Natural killer cell (primary cell): ENCODE measurements at regions of chr2 and their contacts with region 1.

Region 1: GRCh38 chr2:156435715-156436496 is at the start of gene GPD2:
- DNase-seq: peak; percentile 65 to 73
- ATAC-seq: peak; percentile 74 to 79 (median 75)
- H3K4me3 ChIP-seq: peak within 1 kb of the TSS; percentile 66
- H3K4me3 Mint-ChIP-seq: peak within 1 kb of the TSS; percentile 97
- H3K27ac ChIP-seq: peak within 1 kb of the TSS; percentile 79
- H3K27ac Mint-ChIP-seq: peak within 1 kb of the TSS; percentile 93 to 95
- H3K4me1 ChIP-seq: peaks cover 16% of the 10 kb centered on the region
- H3K4me1 Mint-ChIP-seq: peaks cover 34 to 38% of the 10 kb centered on the region in 2 donors
- H3K27me3 ChIP-seq: no peaks in the 10 kb centered on the region
- H3K27me3 Mint-ChIP-seq: no peaks in the 10 kb centered on the region
- CTCF ChIP-seq: no peak
- total RNA-seq, gene GPD2: 12.5 to 20.2 (median 18.3) TPM

Region 2: DNA sequence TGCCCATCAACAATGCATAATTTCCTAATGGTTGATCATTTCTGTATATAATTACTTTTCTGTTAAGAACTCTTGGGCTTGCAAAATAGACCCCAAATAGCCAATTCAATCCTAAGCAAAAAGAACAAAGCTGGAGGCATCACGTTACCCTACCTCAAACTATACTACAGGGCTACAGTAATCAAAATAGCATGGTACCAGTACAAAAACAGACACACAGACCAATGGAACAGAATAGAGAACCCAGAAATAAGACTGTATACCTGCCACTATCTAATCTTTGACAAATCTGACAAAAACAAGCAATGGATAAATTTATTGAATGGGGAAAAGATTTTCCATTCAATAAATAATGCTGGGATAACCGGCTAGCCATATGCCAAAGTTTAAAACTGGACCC is 182.1 kb before region 1 on chr2:
- intact Hi-C with region 1: no loop called
- DNase-seq: no peak
- ATAC-seq: no peak
- H3K4me3 ChIP-seq: no peak overlapping the region
- H3K4me3 Mint-ChIP-seq: no peak overlapping the region
- H3K27ac ChIP-seq: no peak overlapping the region
- H3K27ac Mint-ChIP-seq: no peak overlapping the region
- H3K4me1 ChIP-seq: no peaks in the 10 kb centered on the region
- H3K4me1 Mint-ChIP-seq: no peaks in the 10 kb centered on the region
- H3K27me3 ChIP-seq: no peaks in the 10 kb centered on the region
- H3K27me3 Mint-ChIP-seq: peaks cover 0 to 5% of the 10 kb centered on the region in 2 donors
- CTCF ChIP-seq: no peak

Region 3: DNA sequence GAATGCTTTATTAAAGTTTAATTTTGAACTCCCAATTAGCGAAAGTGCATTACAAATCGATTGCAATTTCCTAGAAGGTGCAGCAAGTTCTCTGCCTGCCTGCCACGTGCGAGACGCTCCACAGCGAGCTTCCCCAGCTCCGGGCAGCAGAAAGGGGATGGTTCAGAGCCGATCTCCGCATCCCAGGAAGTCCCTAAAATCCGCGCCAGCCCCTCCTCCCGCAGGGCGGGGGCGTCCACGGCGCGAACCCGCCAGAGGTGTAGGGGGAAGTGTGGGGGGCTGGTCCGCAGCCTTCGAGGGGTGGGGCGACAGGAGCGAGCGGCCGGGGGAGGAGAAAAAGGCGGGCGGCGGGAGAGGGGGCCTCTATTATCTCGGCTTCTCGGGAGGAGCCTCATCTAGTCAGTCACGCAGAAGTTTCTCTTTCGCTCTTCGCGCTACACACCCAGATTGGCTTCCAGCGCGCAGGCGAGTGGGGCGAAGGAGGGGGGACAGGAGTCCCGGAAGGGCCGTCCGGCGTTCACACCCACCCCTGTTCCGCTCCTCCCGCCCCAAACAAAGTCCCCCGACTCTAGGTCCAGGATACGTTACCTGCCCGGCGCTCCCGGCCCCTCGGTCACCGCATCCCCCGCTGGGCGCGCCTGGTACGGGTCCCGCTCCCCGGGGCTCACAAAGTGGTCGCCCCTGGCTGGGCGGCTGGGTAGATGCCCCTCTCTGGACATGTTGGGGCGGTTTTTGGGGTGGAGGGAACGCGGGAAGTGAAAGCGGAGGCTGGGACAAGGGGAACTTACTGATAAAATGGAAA is 94.3 kb before region 1 on chr2:
- intact Hi-C with region 1: loop called (anchors 2 kb)
- DNase-seq: peak; percentile 78 to 93
- ATAC-seq: peak; percentile 73 to 90 (median 74)
- H3K4me3 ChIP-seq: peak overlapping the region; percentile 100
- H3K4me3 Mint-ChIP-seq: peak overlapping the region; percentile 97
- H3K27ac ChIP-seq: peak overlapping the region; percentile 100
- H3K27ac Mint-ChIP-seq: peak overlapping the region; percentile 96 to 97
- H3K4me1 ChIP-seq: peaks cover 6% of the 10 kb centered on the region
- H3K4me1 Mint-ChIP-seq: peaks cover 24 to 25% of the 10 kb centered on the region in 2 donors
- H3K27me3 ChIP-seq: no peaks in the 10 kb centered on the region
- H3K27me3 Mint-ChIP-seq: no peaks in the 10 kb centered on the region
- CTCF ChIP-seq: no peak

Region 4: GRCh38 chr2:156400706-156401678 is 34.9 kb before region 1 on chr2:
- intact Hi-C with region 1: loop called (anchors 2 kb)
- DNase-seq: peak; percentile 77 to 94
- ATAC-seq: peak; percentile 79 to 85 (median 83)
- H3K4me3 ChIP-seq: peak overlapping the region; percentile 67
- H3K4me3 Mint-ChIP-seq: peak overlapping the region; percentile 99
- H3K27ac ChIP-seq: peak overlapping the region; percentile 97
- H3K27ac Mint-ChIP-seq: peak overlapping the region; percentile 99 to 100
- H3K4me1 ChIP-seq: peaks cover 6% of the 10 kb centered on the region
- H3K4me1 Mint-ChIP-seq: peaks cover 29 to 32% of the 10 kb centered on the region in 2 donors
- H3K27me3 ChIP-seq: no peaks in the 10 kb centered on the region
- H3K27me3 Mint-ChIP-seq: peaks cover 6 to 12% of the 10 kb centered on the region in 2 donors
- CTCF ChIP-seq: no peak

Region 5: GRCh38 chr2:156472686-156473085 is 36.8 kb after region 1 on chr2:
- intact Hi-C with region 1: loop called (anchors 5 kb)
- DNase-seq: peak in 1 of 2 donors; percentile 58
- ATAC-seq: peak; percentile 89 to 95 (median 95)
- H3K4me3 ChIP-seq: no peak overlapping the region
- H3K4me3 Mint-ChIP-seq: peak overlapping the region; percentile 29
- H3K27ac ChIP-seq: no peak overlapping the region
- H3K27ac Mint-ChIP-seq: peak overlapping the region in 1 of 2 donors; percentile 43
- H3K4me1 ChIP-seq: peaks cover 11% of the 10 kb centered on the region
- H3K4me1 Mint-ChIP-seq: peaks cover 60 to 69% of the 10 kb centered on the region in 2 donors
- H3K27me3 ChIP-seq: no peaks in the 10 kb centered on the region
- H3K27me3 Mint-ChIP-seq: no peaks in the 10 kb centered on the region
- CTCF ChIP-seq: no peak

Region 6: DNA sequence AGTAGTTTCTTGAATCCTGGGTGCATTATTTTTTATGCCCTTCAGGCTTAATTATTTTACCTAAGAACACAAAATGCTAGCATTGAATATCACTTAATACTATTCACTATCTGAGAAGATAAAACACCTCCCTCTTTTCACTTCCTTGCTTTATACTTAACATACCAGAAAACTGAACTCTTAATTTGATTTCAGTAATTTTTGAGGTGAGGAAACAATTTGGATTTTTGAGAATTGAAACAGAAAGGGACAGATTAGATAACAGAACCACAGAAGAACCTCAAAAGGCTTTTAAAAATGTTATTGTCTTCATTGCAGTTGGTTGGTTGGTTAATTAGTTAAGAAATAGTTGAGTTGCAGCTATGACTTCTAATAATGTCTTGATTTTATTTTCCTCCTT is 69.8 kb after region 1 on chr2:
- intact Hi-C with region 1: no loop called
- DNase-seq: no peak
- ATAC-seq: no peak
- H3K4me3 ChIP-seq: no peak overlapping the region
- H3K4me3 Mint-ChIP-seq: no peak overlapping the region
- H3K27ac ChIP-seq: no peak overlapping the region
- H3K27ac Mint-ChIP-seq: no peak overlapping the region
- H3K4me1 ChIP-seq: no peaks in the 10 kb centered on the region
- H3K4me1 Mint-ChIP-seq: no peaks in the 10 kb centered on the region
- H3K27me3 ChIP-seq: no peaks in the 10 kb centered on the region
- H3K27me3 Mint-ChIP-seq: no peaks in the 10 kb centered on the region
- CTCF ChIP-seq: no peak